Natural killer cell (primary cell): ENCODE measurements at regions of chr13 and their contacts with region 1.

Region 1: DNA sequence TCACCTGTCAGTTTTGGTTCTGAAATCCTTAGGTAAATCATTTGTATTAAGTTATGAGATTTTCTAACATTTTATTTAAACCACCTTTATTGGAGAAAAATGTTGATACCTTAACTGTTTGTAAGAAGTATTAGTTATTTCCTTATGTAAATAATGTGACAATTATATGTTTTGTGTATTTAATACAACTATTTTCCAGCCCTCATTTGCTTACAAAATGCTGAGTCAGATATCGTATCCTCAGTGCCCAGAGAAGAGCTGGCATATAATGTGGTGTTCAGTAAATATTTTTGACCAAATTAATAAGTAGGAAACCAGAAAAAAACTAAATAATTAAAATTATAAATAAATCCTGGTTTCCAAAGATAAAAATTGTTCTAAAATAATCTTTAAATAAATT is 140.3 kb upstream of the PCDH17 start:
- DNase-seq: no peak
- ATAC-seq: no peak
- H3K4me3 ChIP-seq: no peak overlapping the region
- H3K4me3 Mint-ChIP-seq: no peak overlapping the region
- H3K27ac ChIP-seq: no peak overlapping the region
- H3K27ac Mint-ChIP-seq: no peak overlapping the region
- H3K4me1 ChIP-seq: no peaks in the 10 kb centered on the region
- H3K4me1 Mint-ChIP-seq: no peaks in the 10 kb centered on the region
- H3K27me3 ChIP-seq: no peaks in the 10 kb centered on the region
- H3K27me3 Mint-ChIP-seq: no peaks in the 10 kb centered on the region
- CTCF ChIP-seq: no peak

Region 2: GRCh38 chr13:57740719-57741118 is 249.4 kb after region 1 on chr13:
- intact Hi-C with region 1: loop called (anchors 10 kb)
- DNase-seq: no peak
- ATAC-seq: no peak
- H3K4me3 ChIP-seq: no peak overlapping the region
- H3K4me3 Mint-ChIP-seq: no peak overlapping the region
- H3K27ac ChIP-seq: no peak overlapping the region
- H3K27ac Mint-ChIP-seq: no peak overlapping the region
- H3K4me1 ChIP-seq: no peaks in the 10 kb centered on the region
- H3K4me1 Mint-ChIP-seq: no peaks in the 10 kb centered on the region
- H3K27me3 ChIP-seq: no peaks in the 10 kb centered on the region
- H3K27me3 Mint-ChIP-seq: no peaks in the 10 kb centered on the region
- CTCF ChIP-seq: no peak

Region 3: GRCh38 chr13:59120297-59120843 is 1629.1 kb after region 1 on chr13:
- intact Hi-C with region 1: no loop called
- DNase-seq: no peak
- ATAC-seq: no peak
- H3K4me3 ChIP-seq: no peak overlapping the region
- H3K4me3 Mint-ChIP-seq: no peak overlapping the region
- H3K27ac ChIP-seq: no peak overlapping the region
- H3K27ac Mint-ChIP-seq: no peak overlapping the region
- H3K4me1 ChIP-seq: no peaks in the 10 kb centered on the region
- H3K4me1 Mint-ChIP-seq: no peaks in the 10 kb centered on the region
- H3K27me3 ChIP-seq: no peaks in the 10 kb centered on the region
- H3K27me3 Mint-ChIP-seq: no peaks in the 10 kb centered on the region
- CTCF ChIP-seq: no peak